ENCODE measurements at regions of chr3 and their contacts with region 1.

Region 1: GRCh38 chr3:11060500-11061251 is 68.1 kb downstream of the SLC6A1 start:
- DNase-seq: no peak
- H3K4me3 ChIP-seq: peak overlapping the region; percentile 27; the same call in 1 of the 2 replicates
- CTCF ChIP-seq: peak; percentile 91

Region 2: GRCh38 chr3:10581251-10581650 is 479.4 kb before region 1 on chr3:
- CTCF ChIA-PET with region 1: no interaction called
- POLR2A ChIA-PET with region 1: no interaction called
- DNase-seq: peak; percentile 29
- H3K4me3 ChIP-seq: no peak overlapping the region
- CTCF ChIP-seq: no peak

Region 3: GRCh38 chr3:10758304-10759061 is 302.2 kb before region 1 on chr3:
- CTCF ChIA-PET with region 1: interaction called, 254 read pairs
- POLR2A ChIA-PET with region 1: no interaction called
- DNase-seq: peak; percentile 24
- H3K4me3 ChIP-seq: no peak overlapping the region
- CTCF ChIP-seq: peak; percentile 77

Region 4: GRCh38 chr3:10983219-10983916 is 77.3 kb before region 1 on chr3:
- CTCF ChIA-PET with region 1: interaction called, 10 read pairs
- POLR2A ChIA-PET with region 1: no interaction called
- DNase-seq: no peak
- H3K4me3 ChIP-seq: no peak overlapping the region
- CTCF ChIP-seq: peak; percentile 70

Region 5: GRCh38 chr3:11077466-11077865 is 16.8 kb after region 1 on chr3:
- CTCF ChIA-PET with region 1: interaction called, 87 read pairs
- POLR2A ChIA-PET with region 1: no interaction called
- DNase-seq: peak; percentile 50
- H3K4me3 ChIP-seq: no peak overlapping the region
- CTCF ChIP-seq: no peak

Region 6: GRCh38 chr3:11136871-11137626 is 76.4 kb after region 1 on chr3:
- CTCF ChIA-PET with region 1: interaction called, 12 read pairs
- POLR2A ChIA-PET with region 1: no interaction called
- DNase-seq: peak; percentile 100
- H3K4me3 ChIP-seq: peak overlapping the region; percentile 61
- CTCF ChIP-seq: no peak

Region 7: DNA sequence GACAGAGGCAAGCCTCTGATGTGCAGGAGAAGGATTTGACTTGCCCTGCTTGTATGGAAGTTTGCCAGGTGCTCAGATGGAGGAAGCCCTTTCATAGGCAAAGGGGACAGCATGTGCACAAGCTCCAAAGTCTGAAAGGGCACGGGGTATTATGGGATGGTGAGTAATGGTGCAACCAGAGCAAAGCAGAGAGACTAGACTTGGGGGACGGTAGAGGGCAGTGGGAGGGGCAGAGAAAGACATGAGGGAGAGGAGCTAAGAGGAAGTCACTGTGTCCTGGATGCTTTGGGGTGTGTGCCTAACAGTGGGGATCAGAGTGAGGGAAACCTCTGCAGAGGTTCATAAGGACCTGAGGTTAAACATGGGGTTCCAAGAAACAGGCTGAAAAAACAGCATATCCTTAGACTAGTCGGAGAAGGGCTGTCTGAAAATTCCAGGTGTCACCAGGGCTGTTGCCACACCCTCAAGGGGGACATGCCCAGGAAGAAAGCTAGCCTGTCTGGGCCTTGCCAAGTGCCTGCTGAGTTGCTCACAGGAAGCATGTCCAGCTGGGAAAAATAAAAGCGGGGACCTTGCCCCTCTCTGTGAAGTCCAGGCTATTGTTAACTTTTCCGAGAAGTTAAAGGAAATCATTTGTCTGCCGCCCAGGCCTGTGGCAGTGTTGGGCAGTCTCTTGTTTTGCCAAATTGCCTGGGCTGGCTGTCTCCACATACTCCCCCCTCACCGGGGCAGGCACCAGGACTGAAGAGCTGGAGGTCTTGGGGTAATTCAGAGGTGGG is 140.8 kb after region 1 on chr3:
- CTCF ChIA-PET with region 1: interaction called, 65 read pairs
- POLR2A ChIA-PET with region 1: no interaction called
- DNase-seq: no peak
- H3K4me3 ChIP-seq: no peak overlapping the region
- CTCF ChIP-seq: no peak

Region 8: DNA sequence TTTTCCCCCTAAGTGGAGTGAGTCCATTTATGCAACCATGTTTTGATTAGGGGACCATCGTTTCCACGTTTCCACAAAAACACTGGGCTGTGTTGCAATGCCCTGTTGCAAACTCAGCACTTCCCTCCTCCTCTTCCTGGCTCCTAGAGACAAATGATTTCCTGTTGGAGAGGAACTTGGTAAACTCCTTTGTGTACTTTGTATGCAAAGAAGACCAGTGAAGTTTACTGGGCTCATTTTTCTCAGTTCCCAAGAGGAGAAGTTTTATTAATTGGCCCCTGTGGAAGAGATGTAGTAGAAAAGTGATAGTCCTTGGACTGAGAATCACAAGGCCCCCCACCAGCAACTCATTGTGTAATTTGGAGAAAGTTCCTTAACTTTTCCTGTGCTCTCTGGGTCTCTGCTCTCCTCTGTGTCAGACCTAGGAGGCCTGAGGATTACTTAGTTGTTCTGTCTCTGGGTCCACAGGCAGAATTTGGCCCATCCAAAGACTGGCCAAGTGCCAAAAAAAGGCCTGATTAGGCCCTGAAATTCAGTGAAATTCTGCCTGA is 306.5 kb after region 1 on chr3:
- CTCF ChIA-PET with region 1: interaction called, 10 read pairs
- POLR2A ChIA-PET with region 1: no interaction called
- DNase-seq: no peak
- H3K4me3 ChIP-seq: no peak overlapping the region
- CTCF ChIP-seq: no peak

Region 9: DNA sequence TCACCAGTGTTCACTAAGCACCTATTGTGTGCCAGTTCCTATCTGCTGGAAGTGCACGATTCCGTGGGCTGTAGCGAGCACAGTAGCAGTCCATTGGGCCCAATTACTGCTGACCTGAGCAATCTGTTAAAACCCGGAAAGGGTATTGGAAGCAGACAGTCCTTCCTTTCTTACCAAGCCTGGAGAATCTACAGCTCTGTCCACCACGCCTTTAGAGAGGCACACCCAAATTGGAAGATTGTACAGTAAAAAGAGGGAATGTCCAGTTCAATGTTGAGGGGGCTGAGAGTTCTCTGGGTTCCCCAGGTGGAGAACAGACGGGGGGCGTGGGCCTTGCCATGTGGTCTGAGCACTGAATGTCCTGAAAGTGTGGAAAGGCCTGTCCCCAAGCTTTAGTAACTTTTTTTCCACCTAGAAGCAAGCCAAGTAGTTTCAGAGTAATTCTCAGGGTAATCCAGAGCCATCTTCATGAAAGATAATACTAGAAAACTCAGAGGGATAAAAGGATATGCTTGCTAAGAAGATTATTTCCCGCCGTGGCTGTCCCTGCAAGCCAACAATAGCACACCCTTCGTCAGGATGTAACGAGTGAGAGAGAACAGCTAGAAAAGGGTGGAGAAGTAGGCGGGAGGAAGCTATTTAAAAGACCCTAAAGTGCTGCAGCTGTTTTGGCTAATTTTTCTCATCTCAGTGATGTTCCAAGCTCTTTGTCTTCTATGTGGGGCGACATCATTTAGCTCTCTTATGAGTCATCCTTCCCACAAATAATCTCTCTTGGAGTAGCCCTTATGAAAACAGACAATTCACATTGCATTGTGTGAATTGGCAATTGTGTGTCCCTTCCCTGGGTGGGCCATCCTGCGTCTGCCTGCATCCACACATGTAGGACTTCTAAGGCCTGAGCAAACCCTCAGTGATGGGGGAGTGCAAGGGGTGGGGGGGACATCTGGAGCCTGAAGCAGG is 392.5 kb after region 1 on chr3:
- CTCF ChIA-PET with region 1: no interaction called
- POLR2A ChIA-PET with region 1: no interaction called
- DNase-seq: peak; percentile 26
- H3K4me3 ChIP-seq: no peak overlapping the region
- CTCF ChIP-seq: no peak